ENCODE measurements at regions of chr4 and their contacts with region 1.

Region 1: DNA sequence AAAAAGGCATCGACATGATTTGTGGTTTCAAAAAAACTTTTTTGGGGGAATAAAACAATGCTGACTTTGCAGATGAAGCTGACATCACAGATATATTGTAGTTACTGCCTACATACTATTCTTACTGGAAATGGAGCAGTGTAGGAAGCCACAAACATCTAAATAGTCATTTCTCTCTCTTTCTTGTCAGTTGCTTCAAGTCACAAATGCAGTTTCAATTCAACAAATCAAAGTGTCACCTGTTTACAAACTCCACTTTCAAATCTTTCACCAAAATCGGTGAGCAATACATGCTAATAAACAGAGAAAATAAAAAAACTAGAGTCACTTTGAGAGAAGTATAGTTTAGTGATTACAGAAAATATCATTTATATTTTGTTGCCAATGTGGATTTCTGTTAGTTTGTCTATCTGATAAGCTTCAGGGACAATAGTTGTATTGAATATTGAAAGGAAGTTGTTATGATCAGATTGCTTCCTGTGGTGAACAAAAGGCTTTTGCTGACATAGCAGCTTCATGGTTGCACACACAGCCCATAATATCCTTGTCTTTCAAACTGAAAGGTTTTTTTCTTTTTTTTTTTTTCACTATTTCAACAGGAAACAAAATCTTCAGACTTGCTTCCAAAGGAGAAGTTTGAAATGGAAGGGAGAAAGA is 49.7 kb upstream of the PTPN13 start:
- DNase-seq: no peak

Region 2: GRCh38 chr4:86032476-86033022 is 511.9 kb before region 1 on chr4:
- intact Hi-C with region 1: no loop called
- DNase-seq: no peak

Region 3: GRCh38 chr4:86593688-86594558 is 49.5 kb after region 1 on chr4 and contains the start of gene PTPN13:
- intact Hi-C with region 1: loop called (anchors 5 kb)
- DNase-seq: peak; percentile 92
- total RNA-seq, gene PTPN13: 3.4 TPM

Region 4: DNA sequence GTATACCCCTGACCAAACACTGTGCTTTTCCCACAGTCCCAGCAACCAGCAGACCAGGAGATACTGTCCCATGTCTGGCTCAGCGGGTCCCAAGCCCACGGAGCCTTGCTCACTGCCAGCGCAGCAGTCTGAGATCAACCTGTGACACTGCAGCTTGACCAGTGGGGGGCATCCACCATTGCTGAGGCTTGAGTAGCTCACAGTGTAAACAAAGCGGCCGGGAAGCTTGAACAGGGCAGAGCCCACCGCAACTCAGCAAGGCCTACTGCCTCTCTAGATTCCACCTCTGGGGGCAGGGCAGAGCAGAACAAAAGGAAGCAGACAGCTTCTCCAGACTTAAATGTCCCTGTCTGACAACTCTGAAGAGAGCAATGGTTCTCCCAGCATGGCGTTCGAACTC is 246.7 kb after region 1 on chr4:
- intact Hi-C with region 1: no loop called
- DNase-seq: no peak

Measured in cardiac septum (tissue), 1 donor.